Activated CD4-positive, alpha-beta memory T cell treated with anti-CD3 and anti-CD28 coated beads for 36 hours (primary cell): ENCODE measurements at regions of chr1 and their contacts with region 1.

Region 1: DNA sequence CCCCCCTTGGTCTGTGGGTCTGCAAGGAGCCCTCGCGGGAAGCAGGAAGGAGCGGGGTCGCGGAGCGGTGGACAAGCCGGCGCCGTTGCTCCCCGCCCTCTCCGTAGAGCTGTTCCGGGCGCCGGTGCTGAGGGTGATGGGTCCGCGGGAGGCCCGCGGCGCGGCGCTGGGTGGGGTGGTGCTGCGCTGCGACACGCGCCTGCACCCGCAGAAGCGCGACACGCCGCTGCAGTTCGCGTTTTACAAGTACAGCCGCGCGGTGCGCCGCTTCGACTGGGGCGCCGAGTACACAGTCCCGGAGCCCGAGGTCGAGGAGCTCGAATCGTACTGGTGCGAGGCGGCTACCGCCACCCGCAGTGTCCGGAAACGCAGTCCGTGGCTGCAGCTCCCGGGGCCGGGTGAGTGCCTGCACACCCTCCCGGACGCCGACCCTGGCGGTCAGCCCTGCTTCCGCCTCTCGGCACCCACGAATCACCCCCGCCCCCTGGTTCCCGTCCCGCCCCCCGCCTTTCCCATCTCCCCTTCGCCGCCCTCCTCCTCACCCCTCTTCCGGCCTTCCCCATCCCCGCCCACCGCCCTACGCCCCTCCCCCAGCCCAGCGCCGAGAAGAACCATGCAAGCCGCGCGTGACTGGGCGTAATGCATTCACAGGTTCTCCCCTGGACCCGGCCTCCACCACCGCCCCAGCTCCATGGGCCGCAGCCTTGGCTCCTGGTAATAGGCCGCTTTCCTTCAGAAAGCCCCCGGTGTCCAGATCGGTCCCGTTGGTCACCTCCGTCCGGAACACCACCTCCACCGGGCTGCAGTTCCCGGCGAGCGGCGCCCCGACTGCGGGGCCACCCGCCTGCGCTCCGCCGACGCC is 5.5 kb downstream of the FCRLB start:
- DNase-seq: peak; percentile 77
- H3K4me3 Mint-ChIP-seq: peak overlapping the region; percentile 74
- H3K27ac Mint-ChIP-seq: no peak overlapping the region
- H3K4me1 Mint-ChIP-seq: peaks cover 47% of the 10 kb centered on the region
- H3K27me3 Mint-ChIP-seq: peaks cover 32% of the 10 kb centered on the region

Region 2: DNA sequence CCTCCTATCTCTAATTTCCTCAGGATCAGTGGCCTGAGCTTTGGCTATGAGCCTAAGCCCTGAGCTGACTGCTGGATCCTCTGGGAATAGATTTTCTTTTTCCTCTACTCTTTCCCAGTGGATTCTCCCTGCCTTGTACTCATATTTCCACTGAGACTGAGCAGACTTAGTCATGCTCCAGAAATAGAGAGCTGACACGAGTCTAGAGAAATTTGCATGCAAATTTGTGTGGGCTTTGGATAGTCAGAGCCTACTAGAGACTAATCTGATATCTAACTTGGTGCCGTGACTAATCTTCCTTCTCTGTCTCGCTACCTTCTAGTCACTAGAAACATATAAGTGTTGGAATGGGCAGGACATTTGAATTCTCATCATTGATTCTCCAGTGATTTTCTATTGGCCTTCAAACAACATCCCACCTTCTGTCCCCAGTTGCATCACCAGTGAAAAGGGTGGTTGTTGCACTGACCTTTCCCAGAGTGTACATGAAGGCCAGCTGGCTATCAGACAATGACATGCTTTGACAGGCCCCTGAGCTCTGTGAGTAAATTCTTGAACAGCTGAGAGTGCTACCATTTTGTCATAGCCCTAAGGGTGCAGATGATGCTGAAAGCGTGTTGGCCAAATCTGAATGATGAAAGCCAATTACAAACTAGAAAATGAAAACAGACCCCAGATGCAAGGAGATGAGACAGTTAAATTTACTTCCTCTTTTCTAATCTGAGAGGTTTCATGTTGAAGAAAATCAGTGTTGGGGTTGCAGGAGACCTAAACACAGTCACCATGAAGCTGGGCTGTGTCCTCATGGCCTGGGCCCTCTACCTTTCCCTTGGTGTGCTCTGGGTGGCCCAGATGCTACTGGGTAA is 20.1 kb before region 1 on chr1 and contains the start of gene FCRLA:
- CTCF ChIA-PET with region 1: no interaction called
- POLR2A ChIA-PET with region 1: interaction called, 3 read pairs
- intact Hi-C with region 1: loop called (anchors 2 kb)
- DNase-seq: no peak
- H3K4me3 Mint-ChIP-seq: no peak within 1 kb of the TSS
- H3K27ac Mint-ChIP-seq: no peak within 1 kb of the TSS
- H3K4me1 Mint-ChIP-seq: no peaks in the 10 kb centered on the region
- H3K27me3 Mint-ChIP-seq: peaks cover 5% of the 10 kb centered on the region
- total RNA-seq, gene FCRLA: not detected

Region 3: GRCh38 chr1:161738627-161739287 is 11.9 kb after region 1 on chr1:
- CTCF ChIA-PET with region 1: interaction called, 13 read pairs
- POLR2A ChIA-PET with region 1: interaction called, 3 read pairs
- intact Hi-C with region 1: loop called (anchors 1 kb)
- DNase-seq: peak; percentile 75
- H3K4me3 Mint-ChIP-seq: no peak overlapping the region
- H3K27ac Mint-ChIP-seq: peak overlapping the region; percentile 49
- H3K4me1 Mint-ChIP-seq: peaks cover 29% of the 10 kb centered on the region
- H3K27me3 Mint-ChIP-seq: peaks cover 2% of the 10 kb centered on the region

Region 4: DNA sequence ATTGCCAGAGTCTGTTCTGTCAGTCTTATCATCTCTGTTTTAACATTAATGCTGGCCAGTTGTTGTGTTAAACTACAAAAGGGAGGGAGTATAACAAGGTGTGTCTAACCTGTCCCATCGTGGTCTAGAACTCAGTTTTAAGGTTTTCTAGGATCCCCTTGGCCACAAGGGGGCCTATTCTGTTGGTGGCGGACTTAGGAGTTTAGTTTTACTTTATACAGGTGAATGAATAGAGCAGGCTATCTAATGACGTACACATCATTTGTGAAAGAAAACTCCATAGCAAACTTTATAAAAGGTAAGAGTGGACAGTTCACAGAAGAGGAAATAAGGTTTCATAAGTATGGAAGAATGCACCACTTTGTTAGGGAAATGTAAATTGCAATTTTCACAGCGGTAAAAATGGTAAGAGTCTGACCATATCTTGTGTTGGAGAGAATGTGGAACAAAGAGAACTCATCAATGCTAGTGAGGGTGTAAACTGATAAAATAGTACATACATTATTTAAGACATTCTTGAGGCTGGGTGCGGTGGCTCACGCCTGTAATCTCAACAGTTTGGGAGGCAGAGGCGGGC is 36.8 kb after region 1 on chr1:
- CTCF ChIA-PET with region 1: no interaction called
- POLR2A ChIA-PET with region 1: no interaction called
- intact Hi-C with region 1: no loop called
- DNase-seq: peak; percentile 53
- H3K4me3 Mint-ChIP-seq: peak overlapping the region; percentile 15
- H3K27ac Mint-ChIP-seq: no peak overlapping the region
- H3K4me1 Mint-ChIP-seq: peaks cover 44% of the 10 kb centered on the region
- H3K27me3 Mint-ChIP-seq: no peaks in the 10 kb centered on the region